OCI-LY7 (cell line): ENCODE measurements at regions of chr6 and their contacts with region 1.

Region 1: GRCh38 chr6:52664186-52664990 is 6.5 kb upstream of the TMEM14A start:
- DNase-seq: peak; percentile 97
- H3K4me3 ChIP-seq: peak overlapping the region; percentile 81
- H3K27ac ChIP-seq: peak overlapping the region; percentile 53
- H3K4me1 ChIP-seq: peaks cover 58% of the 10 kb centered on the region
- CTCF ChIP-seq: no peak

Region 2: GRCh38 chr6:52407467-52407866 is 256.9 kb before region 1 on chr6:
- CTCF ChIA-PET with region 1: interaction called, 4 read pairs
- POLR2A ChIA-PET with region 1: interaction called, 11 read pairs
- intact Hi-C with region 1: loop called (anchors 2 kb)
- DNase-seq: peak; percentile 80
- H3K4me3 ChIP-seq: no peak overlapping the region
- H3K27ac ChIP-seq: no peak overlapping the region
- H3K4me1 ChIP-seq: no peaks in the 10 kb centered on the region
- CTCF ChIP-seq: peak; percentile 92

Region 3: GRCh38 chr6:52497652-52498408 is 166.6 kb before region 1 on chr6:
- CTCF ChIA-PET with region 1: interaction called, 5 read pairs
- POLR2A ChIA-PET with region 1: interaction called, 12 read pairs
- intact Hi-C with region 1: loop called (anchors 1 kb)
- DNase-seq: peak; percentile 95
- H3K4me3 ChIP-seq: peak overlapping the region; percentile 59
- H3K27ac ChIP-seq: peak overlapping the region; percentile 99
- H3K4me1 ChIP-seq: peaks cover 75% of the 10 kb centered on the region
- CTCF ChIP-seq: no peak

Region 4: GRCh38 chr6:52529311-52529710 is 135.1 kb before region 1 on chr6:
- CTCF ChIA-PET with region 1: no interaction called
- POLR2A ChIA-PET with region 1: no interaction called
- intact Hi-C with region 1: no loop called
- DNase-seq: no peak
- H3K4me3 ChIP-seq: no peak overlapping the region
- H3K27ac ChIP-seq: no peak overlapping the region
- H3K4me1 ChIP-seq: peaks cover 28% of the 10 kb centered on the region
- CTCF ChIP-seq: no peak

Region 5: DNA sequence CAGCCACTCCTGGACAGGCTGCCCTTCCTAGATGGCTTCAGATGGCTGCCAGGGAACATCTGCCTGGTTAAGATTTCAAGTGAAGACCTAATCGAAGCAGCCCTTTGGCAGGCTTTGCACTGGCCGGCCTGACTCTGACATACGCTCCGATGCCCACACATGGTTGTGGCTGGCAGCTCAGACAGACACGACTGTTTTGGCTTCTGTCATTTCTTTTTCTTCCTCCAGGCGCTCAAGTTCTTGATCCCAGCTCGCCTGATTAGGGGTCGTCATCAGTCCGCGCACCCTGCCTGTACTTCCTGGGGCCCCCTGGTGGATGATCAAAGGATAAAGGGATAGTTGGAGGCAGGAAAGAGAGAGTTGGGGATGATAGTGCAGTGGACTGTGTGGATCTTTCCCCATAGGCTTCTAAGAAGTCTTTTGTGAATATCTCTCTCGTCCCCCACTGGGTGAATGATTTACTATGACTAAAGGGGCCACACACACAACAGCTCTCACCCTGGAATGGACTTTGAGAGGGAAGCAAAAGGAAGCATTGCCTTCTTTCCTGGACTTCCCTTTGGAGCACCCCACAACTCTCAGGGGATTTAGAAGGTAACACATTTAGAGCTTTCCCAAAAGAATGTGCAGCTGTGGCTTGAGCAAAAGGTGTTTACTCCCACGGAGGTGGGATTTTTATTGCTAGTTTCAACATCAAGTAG is 66.1 kb before region 1 on chr6:
- CTCF ChIA-PET with region 1: no interaction called
- POLR2A ChIA-PET with region 1: interaction called, 9 read pairs
- intact Hi-C with region 1: loop called (anchors 2 kb)
- DNase-seq: peak; percentile 84
- H3K4me3 ChIP-seq: peak overlapping the region; percentile 19
- H3K27ac ChIP-seq: peak overlapping the region; percentile 89
- H3K4me1 ChIP-seq: peaks cover 67% of the 10 kb centered on the region
- CTCF ChIP-seq: peak; percentile 86

Region 6: GRCh38 chr6:52647199-52647598 is 17.2 kb before region 1 on chr6:
- CTCF ChIA-PET with region 1: interaction called, 23 read pairs
- POLR2A ChIA-PET with region 1: interaction called, 20 read pairs
- intact Hi-C with region 1: no loop called
- DNase-seq: no peak
- H3K4me3 ChIP-seq: no peak overlapping the region
- H3K27ac ChIP-seq: no peak overlapping the region
- H3K4me1 ChIP-seq: peaks cover 4% of the 10 kb centered on the region
- CTCF ChIP-seq: no peak

Region 7: GRCh38 chr6:52995913-52996645 is 331.7 kb after region 1 on chr6:
- CTCF ChIA-PET with region 1: no interaction called
- POLR2A ChIA-PET with region 1: no interaction called
- intact Hi-C with region 1: loop called (anchors 5 kb)
- DNase-seq: peak; percentile 63
- H3K4me3 ChIP-seq: peak overlapping the region; percentile 59
- H3K27ac ChIP-seq: no peak overlapping the region
- H3K4me1 ChIP-seq: peaks cover 12% of the 10 kb centered on the region
- CTCF ChIP-seq: no peak